Activated CD4-positive, alpha-beta memory T cell treated with anti-CD3 and anti-CD28 coated beads for 36 hours (primary cell): ENCODE measurements at regions of chr10 and their contacts with region 1.

Region 1: DNA sequence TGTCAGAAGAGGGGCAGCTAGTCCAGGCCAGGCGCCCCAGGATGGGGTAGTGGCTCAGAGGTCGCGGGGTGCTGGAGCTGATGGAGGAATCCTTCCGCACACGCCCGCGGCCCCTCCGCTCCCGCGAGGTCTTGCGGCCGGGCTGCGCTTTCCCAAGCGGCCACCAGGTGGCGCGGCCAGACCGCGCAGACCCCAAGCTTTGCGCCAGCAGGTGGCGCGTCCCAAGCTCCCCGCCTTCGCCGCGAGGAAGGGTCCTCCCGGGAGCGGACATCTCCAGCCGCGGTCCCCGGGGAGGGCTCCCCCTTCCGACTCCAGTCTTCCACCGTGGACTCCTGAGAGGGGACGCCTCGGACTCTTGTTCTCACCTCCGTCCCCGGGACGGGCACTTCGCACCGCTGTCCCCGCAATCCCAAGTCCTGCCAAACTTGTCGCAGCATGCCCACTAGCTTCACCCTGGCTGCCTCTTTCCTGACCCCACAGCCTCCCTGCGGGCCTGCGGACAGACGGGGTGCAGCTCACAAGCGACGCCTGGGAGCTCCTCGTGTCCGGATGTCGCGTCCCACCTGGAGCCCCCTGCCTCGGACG is 19.4 kb downstream of the KCNK18 start:
- DNase-seq: peak; percentile 72
- H3K4me3 Mint-ChIP-seq: peak overlapping the region; percentile 63
- H3K27ac Mint-ChIP-seq: no peak overlapping the region
- H3K4me1 Mint-ChIP-seq: peaks cover 9% of the 10 kb centered on the region
- H3K27me3 Mint-ChIP-seq: peaks cover 27% of the 10 kb centered on the region

Region 2: DNA sequence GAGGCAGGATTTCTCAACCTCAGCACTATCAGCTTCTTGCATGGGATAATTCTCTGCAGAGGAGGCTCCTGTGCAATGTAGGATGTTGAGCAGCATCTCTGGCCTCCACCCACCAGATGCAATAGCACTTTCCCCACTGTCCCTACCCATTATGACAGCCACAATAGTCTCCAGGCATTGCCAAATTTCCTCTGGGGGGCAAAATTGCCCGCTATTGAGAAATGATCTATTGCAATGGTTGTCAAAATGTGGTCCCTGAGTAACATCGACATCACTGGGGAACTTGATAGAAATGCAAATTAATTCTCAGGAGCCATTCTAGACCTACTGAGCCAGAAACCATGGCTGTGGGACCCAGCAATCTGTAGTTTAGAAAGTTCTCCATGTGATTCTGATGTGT is 12.4 kb before region 1 on chr10:
- CTCF ChIA-PET with region 1: interaction called, 32 read pairs
- POLR2A ChIA-PET with region 1: no interaction called
- intact Hi-C with region 1: no loop called
- DNase-seq: no peak
- H3K4me3 Mint-ChIP-seq: no peak overlapping the region
- H3K27ac Mint-ChIP-seq: no peak overlapping the region
- H3K4me1 Mint-ChIP-seq: no peaks in the 10 kb centered on the region
- H3K27me3 Mint-ChIP-seq: peaks cover 19% of the 10 kb centered on the region

Region 3: DNA sequence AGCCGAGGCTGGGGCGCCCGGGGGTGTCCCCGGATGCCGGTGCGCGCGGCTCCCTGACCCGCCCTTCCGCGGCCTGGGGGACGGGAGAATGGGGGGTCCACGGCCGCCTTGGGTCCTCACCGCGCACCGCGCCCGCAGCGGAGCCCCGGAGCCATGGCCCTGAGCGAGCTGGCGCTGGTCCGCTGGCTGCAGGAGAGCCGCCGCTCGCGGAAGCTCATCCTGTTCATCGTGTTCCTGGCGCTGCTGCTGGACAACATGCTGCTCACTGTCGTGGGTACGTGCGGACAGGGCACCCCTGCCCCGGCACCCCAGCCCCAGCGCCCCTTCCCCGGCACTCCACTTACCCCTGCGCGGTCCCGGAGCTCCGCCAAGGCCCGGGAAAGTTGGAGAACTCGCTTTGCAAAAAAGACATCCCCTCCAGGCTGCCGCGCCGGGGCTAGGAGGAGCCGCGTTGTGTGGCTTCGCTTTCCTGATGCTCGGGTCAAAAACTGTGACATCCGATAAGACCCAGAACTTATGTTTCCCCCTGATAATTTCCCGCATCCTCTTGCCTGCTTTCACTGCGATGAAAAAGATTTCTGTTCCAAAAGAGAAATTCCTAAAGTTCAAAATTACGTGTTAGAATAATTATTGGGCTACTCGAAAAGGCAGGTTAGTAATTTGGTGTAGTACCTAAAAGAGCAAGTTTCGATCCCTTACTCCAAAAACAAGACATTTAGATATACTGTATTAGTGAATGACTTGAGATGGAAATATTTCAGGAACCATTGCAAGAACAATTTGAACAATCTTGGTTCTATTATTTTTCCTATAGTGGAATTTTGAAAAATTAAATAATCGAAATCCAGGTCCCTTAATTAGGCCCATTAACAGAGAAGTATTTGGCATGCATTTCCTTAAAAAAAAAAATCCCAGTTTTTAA is 25.1 kb after region 1 on chr10:
- CTCF ChIA-PET with region 1: interaction called, 10 read pairs
- POLR2A ChIA-PET with region 1: no interaction called
- intact Hi-C with region 1: no loop called
- DNase-seq: no peak
- H3K4me3 Mint-ChIP-seq: no peak overlapping the region
- H3K27ac Mint-ChIP-seq: no peak overlapping the region
- H3K4me1 Mint-ChIP-seq: peaks cover 3% of the 10 kb centered on the region
- H3K27me3 Mint-ChIP-seq: peaks cover 37% of the 10 kb centered on the region

Region 4: DNA sequence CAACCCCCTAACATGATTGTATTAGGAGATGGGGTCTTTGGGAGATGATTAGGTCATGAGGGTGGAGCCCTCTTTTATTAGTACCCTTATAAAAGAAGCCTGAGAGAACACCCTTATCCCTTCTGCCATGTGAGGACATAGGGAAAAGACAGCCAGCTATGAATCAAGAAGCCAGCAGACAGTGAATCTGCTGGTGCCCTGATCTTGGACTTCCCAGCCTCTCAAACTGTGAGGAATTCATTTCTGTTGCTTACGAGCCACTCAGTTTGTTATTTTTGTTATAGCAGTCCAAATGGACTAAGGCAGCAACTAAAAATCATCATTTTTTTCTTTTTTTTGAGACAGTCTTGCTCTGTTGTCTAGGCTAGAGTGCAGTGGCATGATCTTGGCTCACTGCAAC is 84.0 kb after region 1 on chr10:
- CTCF ChIA-PET with region 1: interaction called, 10 read pairs
- POLR2A ChIA-PET with region 1: no interaction called
- intact Hi-C with region 1: no loop called
- DNase-seq: no peak
- H3K4me3 Mint-ChIP-seq: no peak overlapping the region
- H3K27ac Mint-ChIP-seq: no peak overlapping the region
- H3K4me1 Mint-ChIP-seq: no peaks in the 10 kb centered on the region
- H3K27me3 Mint-ChIP-seq: no peaks in the 10 kb centered on the region

Region 5: GRCh38 chr10:117391436-117392205 is 174.9 kb after region 1 on chr10:
- CTCF ChIA-PET with region 1: interaction called, 10 read pairs
- POLR2A ChIA-PET with region 1: no interaction called
- intact Hi-C with region 1: no loop called
- DNase-seq: no peak
- H3K4me3 Mint-ChIP-seq: no peak overlapping the region
- H3K27ac Mint-ChIP-seq: no peak overlapping the region
- H3K4me1 Mint-ChIP-seq: no peaks in the 10 kb centered on the region
- H3K27me3 Mint-ChIP-seq: peaks cover 36% of the 10 kb centered on the region

Region 6: GRCh38 chr10:117496616-117497028 is 279.9 kb after region 1 on chr10:
- CTCF ChIA-PET with region 1: interaction called, 12 read pairs
- POLR2A ChIA-PET with region 1: no interaction called
- intact Hi-C with region 1: no loop called
- DNase-seq: peak; percentile 79
- H3K4me3 Mint-ChIP-seq: no peak overlapping the region
- H3K27ac Mint-ChIP-seq: no peak overlapping the region
- H3K4me1 Mint-ChIP-seq: no peaks in the 10 kb centered on the region
- H3K27me3 Mint-ChIP-seq: peaks cover 21% of the 10 kb centered on the region

Region 7: GRCh38 chr10:117804470-117805011 is 587.8 kb after region 1 on chr10:
- CTCF ChIA-PET with region 1: no interaction called
- POLR2A ChIA-PET with region 1: no interaction called
- intact Hi-C with region 1: no loop called
- DNase-seq: no peak
- H3K4me3 Mint-ChIP-seq: no peak overlapping the region
- H3K27ac Mint-ChIP-seq: no peak overlapping the region
- H3K4me1 Mint-ChIP-seq: no peaks in the 10 kb centered on the region
- H3K27me3 Mint-ChIP-seq: peaks cover 4% of the 10 kb centered on the region

Region 8: DNA sequence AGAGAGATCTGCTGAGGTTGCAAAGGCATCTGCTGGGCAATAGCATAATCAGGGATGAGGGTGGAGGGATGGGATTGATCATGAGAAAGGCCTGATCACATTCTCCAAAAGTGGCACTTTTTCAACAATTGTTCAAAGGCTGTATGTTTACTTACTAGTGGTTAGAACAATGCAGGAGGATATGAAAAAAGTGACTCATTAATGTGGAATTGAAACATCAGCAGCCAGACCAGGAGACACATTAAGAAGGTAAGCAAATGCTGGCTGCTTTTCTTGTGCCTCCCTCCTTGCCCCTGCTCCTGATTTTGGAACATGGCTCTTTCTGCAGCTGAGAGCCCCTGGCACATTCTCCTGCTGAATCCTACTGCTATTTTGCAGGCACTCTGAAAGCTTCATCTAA is 1061.9 kb after region 1 on chr10:
- CTCF ChIA-PET with region 1: no interaction called
- POLR2A ChIA-PET with region 1: no interaction called
- intact Hi-C with region 1: no loop called
- DNase-seq: no peak
- H3K4me3 Mint-ChIP-seq: no peak overlapping the region
- H3K27ac Mint-ChIP-seq: no peak overlapping the region
- H3K4me1 Mint-ChIP-seq: no peaks in the 10 kb centered on the region
- H3K27me3 Mint-ChIP-seq: peaks cover 7% of the 10 kb centered on the region